Panc1 (cell line): ENCODE measurements at regions of chr6 and their contacts with region 1.

Region 1: GRCh38 chr6:107674995-107675738 is 148.9 kb downstream of the SCML4 start:
- DNase-seq: peak; percentile 70
- ATAC-seq: peak; percentile 99
- H3K4me3 ChIP-seq: peak overlapping the region; percentile 27 to 48
- H3K27ac ChIP-seq: peak overlapping the region; percentile 64
- H3K4me1 ChIP-seq: peaks cover 10% of the 10 kb centered on the region
- H3K27me3 ChIP-seq: peaks cover 5% of the 10 kb centered on the region; the same call in 1 of the 2 replicates
- CTCF ChIP-seq: peak; percentile 100

Region 2: GRCh38 chr6:107132330-107132954 is 542.7 kb before region 1 on chr6:
- CTCF ChIA-PET with region 1: interaction called, 3 read pairs
- POLR2A ChIA-PET with region 1: no interaction called
- in situ Hi-C with region 1: no loop called
- intact Hi-C with region 1: loop called (anchors 10 kb)
- DNase-seq: no peak
- ATAC-seq: no peak
- H3K4me3 ChIP-seq: no peak overlapping the region
- H3K27ac ChIP-seq: no peak overlapping the region
- H3K4me1 ChIP-seq: peaks cover 3% of the 10 kb centered on the region; the same call in 1 of the 2 replicates
- H3K27me3 ChIP-seq: no peaks in the 10 kb centered on the region
- CTCF ChIP-seq: peak; percentile 88

Region 3: DNA sequence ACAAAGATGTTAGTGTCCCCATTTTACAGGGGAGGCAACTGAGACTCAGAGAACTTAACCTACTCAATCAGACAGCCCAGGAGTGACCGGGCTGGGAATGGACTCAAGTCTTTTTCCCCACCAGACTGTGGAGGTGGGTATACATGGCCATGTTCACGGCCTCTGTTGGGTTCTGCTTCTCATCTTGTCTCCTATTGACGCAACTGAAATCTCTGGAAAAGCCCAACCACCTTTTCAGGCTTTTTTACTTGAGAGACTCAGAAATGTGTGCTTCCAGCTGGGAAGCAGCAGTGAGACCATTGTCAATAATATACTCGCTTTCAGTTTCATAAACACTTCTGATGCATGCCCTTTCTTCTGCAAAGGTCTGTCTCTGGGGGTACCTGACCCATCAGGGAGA is 114.5 kb before region 1 on chr6:
- CTCF ChIA-PET with region 1: no interaction called
- POLR2A ChIA-PET with region 1: no interaction called
- in situ Hi-C with region 1: no loop called
- intact Hi-C with region 1: no loop called
- DNase-seq: no peak
- ATAC-seq: no peak
- H3K4me3 ChIP-seq: no peak overlapping the region
- H3K27ac ChIP-seq: no peak overlapping the region
- H3K4me1 ChIP-seq: peaks cover 8% of the 10 kb centered on the region
- H3K27me3 ChIP-seq: no peaks in the 10 kb centered on the region
- CTCF ChIP-seq: no peak

Region 4: DNA sequence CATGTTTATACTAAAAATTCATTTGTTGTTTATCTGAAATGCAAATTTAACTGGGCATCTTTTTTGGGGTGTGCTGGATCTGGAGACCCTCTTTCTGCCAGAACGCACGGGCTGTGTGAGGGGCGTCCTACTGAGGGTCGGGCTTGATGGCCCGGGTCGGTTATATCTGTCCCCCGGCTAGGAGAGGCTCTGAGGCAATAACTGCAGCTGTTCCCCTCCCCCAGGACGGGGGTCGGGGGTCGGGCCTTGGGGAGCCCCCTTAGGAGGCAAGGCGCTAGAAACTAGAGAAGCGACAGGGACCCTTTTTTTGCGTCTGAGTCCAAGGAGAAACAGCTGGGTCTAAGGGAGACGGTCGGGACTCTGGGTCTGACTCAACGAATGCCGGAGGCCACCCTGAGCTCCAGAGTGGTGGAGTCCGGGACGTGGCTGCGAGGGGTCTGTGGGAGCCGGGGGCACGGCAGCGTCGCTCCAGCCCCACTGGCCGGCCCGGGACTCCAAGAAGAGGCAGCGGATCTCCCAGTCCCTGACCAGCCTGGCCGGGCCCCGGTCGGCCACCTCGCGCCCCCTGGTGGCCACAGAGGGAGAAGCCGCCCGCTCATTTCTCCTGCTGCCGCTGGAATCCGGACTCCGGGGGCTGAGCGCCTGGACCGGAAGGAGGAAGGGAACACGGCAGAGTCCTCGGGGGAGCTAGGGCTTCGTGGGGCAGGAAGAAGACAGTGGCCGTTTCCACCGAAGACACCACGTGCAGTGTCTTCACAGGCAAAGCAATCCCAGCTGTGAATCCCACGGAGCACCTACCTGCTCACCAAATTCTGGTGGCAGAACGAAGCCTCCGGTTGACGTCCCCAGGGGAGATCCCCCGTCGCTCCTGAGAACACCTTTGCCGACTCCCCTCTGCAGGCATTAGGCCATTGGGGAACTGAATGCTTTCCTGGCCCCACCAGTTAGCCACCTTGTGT is 173.0 kb after region 1 on chr6:
- CTCF ChIA-PET with region 1: interaction called, 13 read pairs
- POLR2A ChIA-PET with region 1: interaction called, 4 read pairs
- in situ Hi-C with region 1: no loop called
- intact Hi-C with region 1: loop called (anchors 1 kb)
- DNase-seq: peak; percentile 18
- ATAC-seq: peak; percentile 96
- H3K4me3 ChIP-seq: peak overlapping the region; percentile 45 to 71
- H3K27ac ChIP-seq: peak overlapping the region; percentile 30; the same call in 1 of the 2 replicates
- H3K4me1 ChIP-seq: no peaks in the 10 kb centered on the region
- H3K27me3 ChIP-seq: no peaks in the 10 kb centered on the region
- CTCF ChIP-seq: peak; percentile 99